A673 (cell line): ENCODE measurements at regions of chr5 and their contacts with region 1.

Region 1: GRCh38 chr5:176619203-176619568 is 9.2 kb upstream of the GPRIN1 start:
- DNase-seq: peak; percentile 93
- H3K4me3 ChIP-seq: peak overlapping the region; percentile 25
- H3K27ac ChIP-seq: no peak overlapping the region
- H3K4me1 ChIP-seq: peaks cover 4% of the 10 kb centered on the region
- H3K27me3 ChIP-seq: peaks cover 21% of the 10 kb centered on the region
- CTCF ChIP-seq: peak; percentile 67

Region 2: DNA sequence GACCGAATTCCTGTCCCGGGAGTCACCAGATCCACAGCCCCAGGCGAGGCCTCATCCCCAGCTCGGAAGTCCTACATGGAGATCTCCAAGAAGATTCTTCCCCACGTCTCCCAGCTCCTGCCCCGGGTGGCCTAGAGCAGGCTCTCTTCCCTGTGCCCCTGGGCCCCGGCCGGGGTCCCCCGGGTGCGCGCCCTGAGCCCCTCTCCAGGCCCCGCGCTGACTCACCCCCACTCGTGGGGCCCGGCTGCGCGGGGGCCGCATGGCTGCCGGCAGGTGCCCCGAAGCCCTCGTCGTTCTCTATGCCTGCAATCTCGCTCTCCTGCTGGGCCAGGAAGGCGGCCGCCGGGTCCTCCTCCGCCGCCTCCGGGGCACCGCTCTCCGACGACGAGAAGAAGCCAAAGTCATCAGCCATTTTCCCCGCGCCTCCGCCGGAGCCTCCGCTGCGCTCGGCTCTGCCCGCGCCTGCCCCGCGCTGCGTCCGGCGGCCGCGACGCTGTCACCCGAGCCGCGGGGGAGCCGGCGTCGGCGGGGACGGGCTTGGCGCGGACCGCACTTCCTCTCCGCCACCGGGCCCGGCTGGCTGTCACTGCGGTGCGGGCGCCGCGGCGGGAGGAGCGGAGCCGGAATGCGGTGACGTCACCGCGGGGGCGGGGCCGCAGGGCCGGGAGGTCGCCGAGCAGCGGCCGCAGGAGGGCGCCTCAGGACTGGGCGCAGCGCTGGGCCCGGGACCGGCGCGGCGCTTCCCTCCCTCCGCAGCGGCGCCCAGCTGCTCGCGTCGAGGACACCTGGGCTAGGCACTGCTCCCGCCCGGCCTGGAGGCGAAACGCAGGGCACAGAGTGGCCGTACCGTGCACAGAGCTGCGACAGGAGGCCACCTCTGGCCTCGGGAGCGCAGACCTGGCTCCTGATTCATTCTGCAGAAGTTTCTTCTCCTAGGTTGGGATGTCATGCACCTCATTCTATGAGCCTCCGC is 202.9 kb before region 1 on chr5 and contains the start of gene CLTB:
- CTCF ChIA-PET with region 1: no interaction called
- POLR2A ChIA-PET with region 1: no interaction called
- intact Hi-C with region 1: loop called (anchors 5 kb)
- DNase-seq: peak; percentile 77
- H3K4me3 ChIP-seq: peak within 1 kb of the TSS; percentile 82
- H3K27ac ChIP-seq: peak within 1 kb of the TSS; percentile 73
- H3K4me1 ChIP-seq: peaks cover 6% of the 10 kb centered on the region
- H3K27me3 ChIP-seq: no peaks in the 10 kb centered on the region
- CTCF ChIP-seq: peak; percentile 32; the same call in 1 of the 2 replicates
- total RNA-seq, gene CLTB: 48.9 and 61.8 TPM in 2 replicates

Region 3: GRCh38 chr5:177086924-177087706 is 467.9 kb after region 1 on chr5:
- CTCF ChIA-PET with region 1: no interaction called
- POLR2A ChIA-PET with region 1: no interaction called
- intact Hi-C with region 1: no loop called
- DNase-seq: peak; percentile 67
- H3K4me3 ChIP-seq: peak overlapping the region; percentile 57
- H3K27ac ChIP-seq: peak overlapping the region; percentile 57
- H3K4me1 ChIP-seq: peaks cover 22% of the 10 kb centered on the region
- H3K27me3 ChIP-seq: no peaks in the 10 kb centered on the region
- CTCF ChIP-seq: peak; percentile 68